ENCODE measurements at regions of chr9 and their contacts with region 1.

Region 1: GRCh38 chr9:85610074-85610860 is 131.5 kb downstream of the AGTPBP1 start:
- DNase-seq: no peak
- ATAC-seq: peak; percentile 70 to 79
- H3K4me3 ChIP-seq: peak overlapping the region; percentile 17
- H3K27ac ChIP-seq: no peak overlapping the region
- H3K4me1 ChIP-seq: no peaks in the 10 kb centered on the region
- H3K27me3 ChIP-seq: no peaks in the 10 kb centered on the region

Region 2: DNA sequence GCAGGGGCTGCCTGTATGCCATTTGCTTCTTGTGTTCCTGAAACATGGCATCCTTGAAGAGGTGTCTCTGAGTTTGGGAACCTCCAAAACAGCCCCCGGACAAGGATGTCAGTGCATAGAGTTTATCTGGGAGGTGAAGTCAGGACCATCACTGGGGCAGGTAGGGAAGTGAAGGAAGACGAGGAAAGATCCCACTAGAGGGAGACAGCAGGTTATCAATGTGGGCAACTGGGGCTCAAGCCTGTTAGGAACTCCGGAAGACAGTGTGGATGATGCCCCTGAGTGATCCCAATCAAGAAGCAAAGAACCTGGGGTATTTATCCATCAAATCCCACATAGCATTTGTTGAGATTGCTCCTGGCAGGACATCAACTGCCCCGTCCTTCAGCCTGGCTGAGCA is 101.7 kb before region 1 on chr9:
- intact Hi-C with region 1: loop called in 1 of 4 experiments (anchors 5 kb)
- DNase-seq: no peak
- ATAC-seq: no peak
- H3K4me3 ChIP-seq: no peak overlapping the region
- H3K27ac ChIP-seq: no peak overlapping the region
- H3K4me1 ChIP-seq: peaks cover 6% of the 10 kb centered on the region
- H3K27me3 ChIP-seq: no peaks in the 10 kb centered on the region